IMR-90 (cell line): ENCODE measurements at regions of chr5 and their contacts with region 1.

Region 1: GRCh38 chr5:80703747-80704146 is 49.0 kb upstream of the DHFR start:
- DNase-seq: no peak
- ATAC-seq: no peak
- H3K4me3 ChIP-seq: no peak overlapping the region
- H3K27ac ChIP-seq: no peak overlapping the region
- H3K4me1 ChIP-seq: peaks cover 5% of the 10 kb centered on the region
- H3K27me3 ChIP-seq: no peaks in the 10 kb centered on the region
- CTCF ChIP-seq: no peak
- POLR2A ChIP-seq: no peak
- RAD21 ChIP-seq: no peak

Region 2: GRCh38 chr5:81326554-81326953 is 622.8 kb after region 1 on chr5:
- CTCF ChIA-PET with region 1: no interaction called
- POLR2A ChIA-PET with region 1: interaction called, 15 read pairs
- dilution Hi-C with region 1: no loop called
- in situ Hi-C with region 1: no loop called
- intact Hi-C with region 1: no loop called
- DNase-seq: peak; percentile 16
- ATAC-seq: no peak
- H3K4me3 ChIP-seq: no peak overlapping the region
- H3K27ac ChIP-seq: no peak overlapping the region
- H3K4me1 ChIP-seq: no peaks in the 10 kb centered on the region
- H3K27me3 ChIP-seq: peaks cover 4% of the 10 kb centered on the region
- CTCF ChIP-seq: no peak
- POLR2A ChIP-seq: no peak
- RAD21 ChIP-seq: no peak